MCF 10A (cell line): ENCODE measurements at regions of chr1 and their contacts with region 1.

Region 1: GRCh38 chr1:85581802-85582686 is 1.5 kb downstream of the CCN1 start:
- DNase-seq: peak; percentile 75
- H3K4me3 Mint-ChIP-seq: peak overlapping the region; percentile 94
- H3K27ac Mint-ChIP-seq: peak overlapping the region; percentile 97
- H3K4me1 Mint-ChIP-seq: peaks cover 37% of the 10 kb centered on the region
- H3K27me3 Mint-ChIP-seq: no peaks in the 10 kb centered on the region
- CTCF ChIP-seq: peak; percentile 27

Region 2: GRCh38 chr1:85240174-85240601 is 341.9 kb before region 1 on chr1:
- CTCF ChIA-PET with region 1: no interaction called
- POLR2A ChIA-PET with region 1: no interaction called
- intact Hi-C with region 1: no loop called
- DNase-seq: peak; percentile 46
- H3K4me3 Mint-ChIP-seq: no peak overlapping the region
- H3K27ac Mint-ChIP-seq: no peak overlapping the region
- H3K4me1 Mint-ChIP-seq: peaks cover 11% of the 10 kb centered on the region
- H3K27me3 Mint-ChIP-seq: no peaks in the 10 kb centered on the region
- CTCF ChIP-seq: peak; percentile 40

Region 3: GRCh38 chr1:85289207-85289847 is 292.7 kb before region 1 on chr1:
- CTCF ChIA-PET with region 1: no interaction called
- POLR2A ChIA-PET with region 1: no interaction called
- intact Hi-C with region 1: no loop called
- DNase-seq: peak; percentile 98
- H3K4me3 Mint-ChIP-seq: peak overlapping the region; percentile 6
- H3K27ac Mint-ChIP-seq: peak overlapping the region; percentile 69
- H3K4me1 Mint-ChIP-seq: peaks cover 24% of the 10 kb centered on the region
- H3K27me3 Mint-ChIP-seq: no peaks in the 10 kb centered on the region
- CTCF ChIP-seq: no peak

Region 4: GRCh38 chr1:85398391-85399064 is 183.5 kb before region 1 on chr1:
- CTCF ChIA-PET with region 1: interaction called, 4 read pairs
- POLR2A ChIA-PET with region 1: interaction called, 3 read pairs
- intact Hi-C with region 1: loop called (anchors 2 kb)
- DNase-seq: peak; percentile 66
- H3K4me3 Mint-ChIP-seq: no peak overlapping the region
- H3K27ac Mint-ChIP-seq: no peak overlapping the region
- H3K4me1 Mint-ChIP-seq: peaks cover 7% of the 10 kb centered on the region
- H3K27me3 Mint-ChIP-seq: no peaks in the 10 kb centered on the region
- CTCF ChIP-seq: peak; percentile 44

Region 5: DNA sequence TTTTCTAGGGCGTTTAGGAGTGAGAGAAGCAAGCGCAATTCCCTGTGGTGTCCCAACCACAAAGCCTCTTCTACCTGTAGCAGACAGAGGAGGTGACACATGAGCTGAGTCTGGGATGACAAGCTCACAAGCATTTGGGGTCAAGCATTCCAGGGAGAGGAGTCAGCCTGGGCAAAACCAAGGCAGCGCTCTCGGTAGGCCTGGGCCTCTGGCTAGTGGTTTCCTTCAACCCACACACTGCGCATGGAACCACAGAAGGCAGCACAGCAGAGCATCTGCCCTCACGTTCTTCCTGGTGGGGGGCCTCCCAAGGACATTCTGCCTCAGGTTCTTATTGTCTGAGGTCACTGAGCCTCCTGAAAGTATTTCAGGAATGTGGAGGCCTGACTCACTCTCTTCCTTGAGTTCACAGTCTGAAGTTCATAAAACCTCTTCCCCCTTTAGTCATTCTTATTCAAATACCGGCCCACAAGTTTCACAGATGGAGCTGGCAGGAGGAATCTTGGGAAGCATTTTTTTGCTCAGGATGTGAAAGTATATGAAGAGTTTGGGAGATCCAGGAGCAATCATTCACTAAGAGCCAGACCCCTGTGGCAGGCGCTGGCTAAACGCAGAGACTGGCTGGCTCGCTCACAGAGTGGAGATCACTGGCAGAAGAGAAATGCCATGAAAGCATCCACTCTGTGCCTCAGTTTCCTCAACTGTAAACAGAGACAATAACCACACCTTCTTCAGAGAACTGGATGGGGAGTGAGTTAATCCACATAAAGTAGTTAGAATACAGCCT is 25.3 kb after region 1 on chr1:
- CTCF ChIA-PET with region 1: interaction called, 9 read pairs
- POLR2A ChIA-PET with region 1: interaction called, 30 read pairs
- intact Hi-C with region 1: loop called (anchors 1 kb)
- DNase-seq: peak; percentile 91
- H3K4me3 Mint-ChIP-seq: peak overlapping the region; percentile 4
- H3K27ac Mint-ChIP-seq: peak overlapping the region; percentile 65
- H3K4me1 Mint-ChIP-seq: peaks cover 38% of the 10 kb centered on the region
- H3K27me3 Mint-ChIP-seq: no peaks in the 10 kb centered on the region
- CTCF ChIP-seq: no peak

Region 6: GRCh38 chr1:85612704-85613361 is 30.8 kb after region 1 on chr1:
- CTCF ChIA-PET with region 1: interaction called, 9 read pairs
- POLR2A ChIA-PET with region 1: interaction called, 30 read pairs
- intact Hi-C with region 1: loop called (anchors 1 kb)
- DNase-seq: peak; percentile 59
- H3K4me3 Mint-ChIP-seq: no peak overlapping the region
- H3K27ac Mint-ChIP-seq: peak overlapping the region; percentile 68
- H3K4me1 Mint-ChIP-seq: peaks cover 30% of the 10 kb centered on the region
- H3K27me3 Mint-ChIP-seq: no peaks in the 10 kb centered on the region
- CTCF ChIP-seq: peak; percentile 38

Region 7: DNA sequence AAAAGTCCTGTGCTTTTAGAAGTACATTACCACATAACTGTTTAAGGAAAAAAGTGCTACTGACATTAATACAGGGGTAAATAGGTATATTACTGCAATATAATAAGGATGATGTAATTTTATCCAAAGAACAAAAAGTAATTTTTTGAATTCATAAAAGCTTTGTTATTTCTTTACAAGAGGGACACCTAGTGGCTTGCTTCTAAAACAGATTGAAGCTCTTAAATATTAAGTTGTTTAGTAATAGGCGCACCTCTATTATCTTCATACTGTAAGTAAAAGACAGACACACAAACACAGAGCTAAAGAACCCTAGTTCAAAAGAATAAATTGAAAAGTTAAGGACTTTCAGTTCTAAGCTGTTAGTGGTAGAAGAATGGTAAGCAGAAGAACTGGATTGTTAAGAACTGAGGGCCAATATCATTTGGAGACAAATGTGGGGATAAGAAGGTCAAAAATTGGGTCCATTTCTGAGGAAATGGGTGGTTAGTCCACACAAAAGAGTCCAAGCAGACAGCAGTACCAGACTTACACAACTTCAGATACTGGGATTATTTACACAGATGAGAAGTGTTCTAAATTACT is 110.8 kb after region 1 on chr1:
- CTCF ChIA-PET with region 1: interaction called, 16 read pairs
- POLR2A ChIA-PET with region 1: interaction called, 8 read pairs
- intact Hi-C with region 1: loop called (anchors 2 kb)
- DNase-seq: peak; percentile 52
- H3K4me3 Mint-ChIP-seq: no peak overlapping the region
- H3K27ac Mint-ChIP-seq: peak overlapping the region; percentile 65
- H3K4me1 Mint-ChIP-seq: peaks cover 10% of the 10 kb centered on the region
- H3K27me3 Mint-ChIP-seq: no peaks in the 10 kb centered on the region
- CTCF ChIP-seq: peak; percentile 60